ENCODE measurements at regions of chr15 and their contacts with region 1.

Region 1: GRCh38 chr15:65832549-65833364 is 36.5 kb upstream of the RAB11A start:
- DNase-seq: no peak
- ATAC-seq: peak; percentile 56
- H3K4me3 ChIP-seq: peak overlapping the region; percentile 45; the same call in 1 of the 2 replicates
- H3K27ac ChIP-seq: peak overlapping the region; percentile 79
- H3K4me1 ChIP-seq: peaks cover 25% of the 10 kb centered on the region
- H3K27me3 ChIP-seq: no peaks in the 10 kb centered on the region
- CTCF ChIP-seq: no peak
- EP300 ChIP-seq: no peak
- POLR2A ChIP-seq: peak; percentile 36; the same call in 1 of the 2 replicates
- RAD21 ChIP-seq: no peak

Region 2: DNA sequence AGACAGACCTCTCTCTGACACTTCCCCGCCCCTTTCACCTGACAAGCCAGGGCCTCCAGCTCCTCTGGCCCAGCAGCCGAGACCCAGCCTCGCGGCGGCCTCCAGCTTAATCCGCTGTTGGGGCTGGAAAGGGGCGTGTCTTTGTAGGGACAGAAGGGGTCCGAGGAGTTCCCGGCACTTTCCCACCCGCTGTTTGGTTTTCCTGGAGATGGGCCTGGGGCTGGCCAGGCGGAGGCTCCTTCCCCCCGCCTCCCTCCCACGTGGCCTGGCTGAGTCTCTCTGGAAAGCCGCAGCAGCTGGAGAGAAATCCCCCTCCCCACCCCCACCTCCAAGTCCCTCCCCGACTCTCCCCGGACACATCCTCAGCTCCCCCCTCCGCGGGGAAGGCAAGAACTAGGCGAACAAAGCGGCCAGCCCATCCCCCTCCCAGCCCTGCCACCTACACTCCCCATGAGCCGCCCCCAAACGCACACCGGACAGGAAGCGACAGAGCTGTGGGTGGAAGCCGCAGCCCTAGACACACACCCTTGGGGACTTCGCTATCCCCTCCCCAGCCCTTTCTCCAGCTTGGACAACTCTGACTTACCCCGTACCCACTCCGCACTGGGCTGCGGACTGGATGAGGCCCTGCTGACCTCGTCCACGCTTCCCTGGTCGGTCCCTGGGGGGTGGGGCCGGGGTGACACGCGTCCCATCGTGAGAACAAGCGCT is 411.2 kb before region 1 on chr15:
- CTCF ChIA-PET with region 1: no interaction called
- POLR2A ChIA-PET with region 1: no interaction called
- RAD21 ChIA-PET with region 1: no interaction called
- SMC1A ChIA-PET with region 1: no interaction called
- in situ Hi-C with region 1: no loop called
- intact Hi-C with region 1: no loop called
- DNase-seq: no peak
- ATAC-seq: peak; percentile 86
- H3K4me3 ChIP-seq: peak overlapping the region; percentile 58; the same call in 1 of the 2 replicates
- H3K27ac ChIP-seq: peak overlapping the region; percentile 18; the same call in 1 of the 2 replicates
- H3K4me1 ChIP-seq: peaks cover 7% of the 10 kb centered on the region
- H3K27me3 ChIP-seq: peaks cover 2 to 11% of the 10 kb centered on the region in 2 experiments
- CTCF ChIP-seq: no peak
- EP300 ChIP-seq: peak; percentile 19 to 30; a peak in 2 of 4 replicates
- POLR2A ChIP-seq: 0 out of 2 replicates have a peak, but pooled peaks have one; percentile 26
- RAD21 ChIP-seq: no peak

Region 3: DNA sequence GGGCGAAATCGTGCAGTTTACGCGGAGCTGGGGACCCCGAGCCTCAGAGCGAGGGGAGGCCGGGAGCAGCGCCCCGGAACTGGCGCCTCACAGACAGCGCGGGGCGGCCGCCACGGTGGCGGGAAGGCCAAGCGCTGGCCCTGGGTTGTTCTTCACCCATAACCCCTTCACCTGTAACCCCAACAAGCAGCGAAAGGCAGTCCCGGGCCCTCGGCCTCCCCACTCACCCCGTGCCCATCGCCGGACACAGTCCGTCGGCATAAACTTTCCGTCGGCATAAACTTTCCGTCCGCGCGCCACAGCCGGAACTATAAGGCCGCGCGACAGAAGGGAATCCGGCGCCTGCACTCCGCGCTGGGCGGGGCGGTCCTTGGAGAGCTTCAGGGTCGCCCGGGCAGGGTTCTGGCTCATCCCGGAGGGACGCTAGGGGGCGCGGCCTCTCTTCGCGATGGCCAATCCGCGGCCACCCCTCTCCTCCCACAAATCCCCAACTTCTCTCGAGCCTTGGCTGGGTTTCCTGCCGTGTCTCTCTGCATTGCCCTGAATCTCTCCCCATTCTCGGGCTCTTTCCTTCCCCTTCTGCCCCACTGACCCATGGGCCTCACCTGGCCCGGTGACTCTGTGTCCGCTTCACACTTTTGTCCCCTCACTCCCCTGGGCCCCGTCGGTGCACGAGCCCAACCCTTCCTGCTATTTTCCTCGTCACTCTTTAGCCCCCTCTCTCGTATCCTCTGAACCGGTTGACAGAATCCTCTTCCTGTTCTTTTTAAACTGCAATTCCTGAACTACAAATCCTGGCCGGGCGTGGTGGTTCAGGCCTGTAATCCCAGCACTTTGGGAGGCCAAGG is 221.7 kb before region 1 on chr15 and contains the start of gene INTS14:
- CTCF ChIA-PET with region 1: interaction called, 28 read pairs
- POLR2A ChIA-PET with region 1: interaction called, 6 read pairs
- RAD21 ChIA-PET with region 1: interaction called, 4 read pairs
- SMC1A ChIA-PET with region 1: interaction called, 6 read pairs
- in situ Hi-C with region 1: no loop called
- intact Hi-C with region 1: no loop called
- DNase-seq: peak; percentile 67
- ATAC-seq: peak; percentile 99
- H3K4me3 ChIP-seq: peak within 1 kb of the TSS; percentile 88
- H3K27ac ChIP-seq: peak within 1 kb of the TSS; percentile 76
- H3K4me1 ChIP-seq: peaks cover 7% of the 10 kb centered on the region
- H3K27me3 ChIP-seq: no peaks in the 10 kb centered on the region
- CTCF ChIP-seq: peak; percentile 63 to 92 (median 67)
- EP300 ChIP-seq: peak in 1 of 2 experiments; percentile 27; a peak in 1 of 4 replicates
- POLR2A ChIP-seq: peak; percentile 88
- RAD21 ChIP-seq: peak; percentile 41; the same call in 1 of the 2 replicates
- polyA plus RNA-seq, gene INTS14: 39.4 to 41.9 TPM

Region 4: GRCh38 chr15:65646486-65646885 is 186.3 kb before region 1 on chr15:
- CTCF ChIA-PET with region 1: interaction called, 192 read pairs
- POLR2A ChIA-PET with region 1: no interaction called
- RAD21 ChIA-PET with region 1: interaction called, 69 read pairs
- SMC1A ChIA-PET with region 1: interaction called, 15 read pairs
- in situ Hi-C with region 1: no loop called
- intact Hi-C with region 1: no loop called
- DNase-seq: no peak
- ATAC-seq: no peak
- H3K4me3 ChIP-seq: no peak overlapping the region
- H3K27ac ChIP-seq: no peak overlapping the region
- H3K4me1 ChIP-seq: peaks cover 9% of the 10 kb centered on the region
- H3K27me3 ChIP-seq: no peaks in the 10 kb centered on the region
- CTCF ChIP-seq: no peak
- EP300 ChIP-seq: no peak
- POLR2A ChIP-seq: no peak
- RAD21 ChIP-seq: no peak

Region 5: DNA sequence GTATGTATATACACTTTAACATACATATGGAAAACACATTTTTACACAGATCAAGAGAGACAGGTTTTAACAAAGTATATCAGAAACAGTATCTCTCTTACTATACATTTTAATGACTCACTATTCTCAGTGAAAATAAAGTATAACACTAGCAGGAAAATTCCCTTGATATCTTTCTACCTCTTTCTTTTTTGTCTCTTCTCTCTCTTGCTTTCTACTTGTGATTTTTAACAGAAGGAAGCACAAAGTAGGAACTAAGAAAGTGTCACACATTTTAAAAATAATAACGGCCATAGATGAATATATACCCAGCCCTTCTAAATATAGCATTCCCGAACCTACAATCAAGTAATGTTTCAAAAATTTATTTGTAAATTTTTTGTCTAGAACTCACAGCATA is 45.5 kb before region 1 on chr15:
- CTCF ChIA-PET with region 1: interaction called, 155 read pairs
- POLR2A ChIA-PET with region 1: interaction called, 8 read pairs
- RAD21 ChIA-PET with region 1: interaction called, 11 read pairs
- SMC1A ChIA-PET with region 1: interaction called, 488 read pairs
- in situ Hi-C with region 1: no loop called
- intact Hi-C with region 1: no loop called
- DNase-seq: no peak
- ATAC-seq: no peak
- H3K4me3 ChIP-seq: peak overlapping the region; percentile 69
- H3K27ac ChIP-seq: peak overlapping the region; percentile 84
- H3K4me1 ChIP-seq: no peaks in the 10 kb centered on the region; the same call in 1 of the 2 replicates
- H3K27me3 ChIP-seq: no peaks in the 10 kb centered on the region
- CTCF ChIP-seq: no peak
- EP300 ChIP-seq: no peak
- POLR2A ChIP-seq: no peak
- RAD21 ChIP-seq: no peak

Region 6: GRCh38 chr15:65856821-65857455 is 24.2 kb after region 1 on chr15:
- CTCF ChIA-PET with region 1: interaction called, 61 read pairs
- POLR2A ChIA-PET with region 1: interaction called, 6 read pairs
- RAD21 ChIA-PET with region 1: interaction called, 15 read pairs
- SMC1A ChIA-PET with region 1: interaction called, 19 read pairs
- in situ Hi-C with region 1: no loop called
- intact Hi-C with region 1: no loop called
- DNase-seq: no peak
- ATAC-seq: peak; percentile 89
- H3K4me3 ChIP-seq: no peak overlapping the region
- H3K27ac ChIP-seq: no peak overlapping the region
- H3K4me1 ChIP-seq: peaks cover 19% of the 10 kb centered on the region
- H3K27me3 ChIP-seq: no peaks in the 10 kb centered on the region
- CTCF ChIP-seq: peak; percentile 74 to 91 (median 88)
- EP300 ChIP-seq: no peak
- POLR2A ChIP-seq: no peak
- RAD21 ChIP-seq: peak; percentile 51

Region 7: DNA sequence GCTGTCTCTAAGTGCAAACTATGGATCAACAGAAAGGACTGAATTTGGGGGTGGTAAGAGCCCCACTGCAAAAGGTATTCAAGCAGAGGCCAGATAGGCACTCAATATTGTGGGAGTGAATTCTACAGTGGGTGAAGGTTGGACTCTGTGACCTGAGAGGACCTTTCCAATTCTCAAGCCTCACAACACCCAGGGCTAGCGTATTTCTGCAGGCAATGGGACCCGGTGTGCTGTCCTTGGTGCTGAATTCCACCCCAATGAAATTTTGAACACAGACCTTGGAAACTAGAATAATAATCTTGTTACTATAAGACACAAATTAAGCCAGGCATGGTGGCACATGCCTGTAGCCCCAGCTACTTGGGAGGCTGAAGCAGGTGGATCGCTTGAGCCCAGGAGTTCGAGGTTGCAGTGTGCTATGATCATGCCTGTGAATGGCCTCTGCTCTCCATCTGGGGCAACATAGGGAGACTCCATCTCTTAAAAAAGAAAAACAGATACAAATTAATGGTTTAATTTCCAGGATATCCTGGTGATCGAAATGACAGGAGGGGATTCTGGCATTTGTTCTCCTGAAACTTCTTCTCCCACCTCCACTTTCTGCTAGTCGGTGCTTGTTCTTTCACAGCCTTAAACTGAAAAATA is 172.0 kb after region 1 on chr15:
- CTCF ChIA-PET with region 1: no interaction called
- POLR2A ChIA-PET with region 1: no interaction called
- RAD21 ChIA-PET with region 1: no interaction called
- SMC1A ChIA-PET with region 1: no interaction called
- in situ Hi-C with region 1: no loop called
- intact Hi-C with region 1: no loop called
- DNase-seq: no peak
- ATAC-seq: no peak
- H3K4me3 ChIP-seq: no peak overlapping the region
- H3K27ac ChIP-seq: no peak overlapping the region
- H3K4me1 ChIP-seq: no peaks in the 10 kb centered on the region
- H3K27me3 ChIP-seq: 0 out of 4 replicates have a peak, but pooled peaks cover 0 to 1% of the 10 kb centered on the region in 2 experiments
- CTCF ChIP-seq: no peak
- EP300 ChIP-seq: no peak
- POLR2A ChIP-seq: no peak
- RAD21 ChIP-seq: no peak